WTC11 (cell line): ENCODE measurements at regions of chr1 and their contacts with region 1.

Region 1: DNA sequence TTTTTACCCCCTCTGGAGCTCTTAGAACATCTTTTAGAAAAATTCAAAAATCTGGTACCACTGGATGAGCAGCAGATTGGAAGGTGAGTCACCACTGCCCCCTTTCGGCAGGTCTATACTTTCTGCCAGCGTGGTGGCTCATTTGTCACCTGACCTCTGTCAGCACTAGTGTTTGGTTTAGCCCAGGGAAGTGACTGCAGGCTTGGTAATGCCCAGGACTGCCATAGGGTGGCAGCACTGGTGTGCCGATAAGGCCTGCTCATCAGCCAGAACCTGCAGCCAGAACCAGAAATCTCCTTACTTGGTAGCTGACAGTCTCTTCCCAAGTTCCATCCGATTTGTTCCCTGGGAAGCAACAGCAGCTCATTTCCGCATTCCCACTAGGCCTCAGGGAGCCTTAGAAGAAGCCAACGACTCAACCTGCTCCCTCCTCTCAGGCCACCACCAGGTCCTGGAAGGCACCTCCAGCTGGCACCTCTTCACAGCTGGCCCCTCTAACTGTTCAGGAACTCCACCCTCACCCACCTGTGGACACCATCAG is 6.8 kb downstream of the SMIM12 start:
- DNase-seq: peak; percentile 97
- ATAC-seq: peak; percentile 98
- H3K4me3 Mint-ChIP-seq: no peak overlapping the region
- H3K27ac Mint-ChIP-seq: peak overlapping the region; percentile 94
- H3K4me1 Mint-ChIP-seq: peaks cover 32% of the 10 kb centered on the region
- H3K27me3 Mint-ChIP-seq: no peaks in the 10 kb centered on the region
- CTCF ChIP-seq: peak; percentile 96

Region 2: GRCh38 chr1:34742667-34743270 is 110.0 kb before region 1 on chr1:
- CTCF ChIA-PET with region 1: interaction called, 10 read pairs
- POLR2A ChIA-PET with region 1: no interaction called
- DNase-seq: peak; percentile 92
- ATAC-seq: peak; percentile 93
- H3K4me3 Mint-ChIP-seq: no peak overlapping the region
- H3K27ac Mint-ChIP-seq: no peak overlapping the region
- H3K4me1 Mint-ChIP-seq: peaks cover 10% of the 10 kb centered on the region
- H3K27me3 Mint-ChIP-seq: peaks cover 8% of the 10 kb centered on the region
- CTCF ChIP-seq: peak; percentile 90

Region 3: GRCh38 chr1:34796990-34797389 is 55.8 kb before region 1 on chr1:
- CTCF ChIA-PET with region 1: interaction called, 45 read pairs
- POLR2A ChIA-PET with region 1: no interaction called
- DNase-seq: no peak
- ATAC-seq: no peak
- H3K4me3 Mint-ChIP-seq: no peak overlapping the region
- H3K27ac Mint-ChIP-seq: no peak overlapping the region
- H3K4me1 Mint-ChIP-seq: peaks cover 17% of the 10 kb centered on the region
- H3K27me3 Mint-ChIP-seq: peaks cover 21% of the 10 kb centered on the region
- CTCF ChIP-seq: no peak

Region 4: GRCh38 chr1:34825455-34826091 is 27.2 kb before region 1 on chr1:
- CTCF ChIA-PET with region 1: interaction called, 14 read pairs
- POLR2A ChIA-PET with region 1: no interaction called
- DNase-seq: no peak
- ATAC-seq: no peak
- H3K4me3 Mint-ChIP-seq: no peak overlapping the region
- H3K27ac Mint-ChIP-seq: no peak overlapping the region
- H3K4me1 Mint-ChIP-seq: no peaks in the 10 kb centered on the region
- H3K27me3 Mint-ChIP-seq: no peaks in the 10 kb centered on the region; the same call in 1 of the 2 replicates
- CTCF ChIP-seq: no peak

Region 5: DNA sequence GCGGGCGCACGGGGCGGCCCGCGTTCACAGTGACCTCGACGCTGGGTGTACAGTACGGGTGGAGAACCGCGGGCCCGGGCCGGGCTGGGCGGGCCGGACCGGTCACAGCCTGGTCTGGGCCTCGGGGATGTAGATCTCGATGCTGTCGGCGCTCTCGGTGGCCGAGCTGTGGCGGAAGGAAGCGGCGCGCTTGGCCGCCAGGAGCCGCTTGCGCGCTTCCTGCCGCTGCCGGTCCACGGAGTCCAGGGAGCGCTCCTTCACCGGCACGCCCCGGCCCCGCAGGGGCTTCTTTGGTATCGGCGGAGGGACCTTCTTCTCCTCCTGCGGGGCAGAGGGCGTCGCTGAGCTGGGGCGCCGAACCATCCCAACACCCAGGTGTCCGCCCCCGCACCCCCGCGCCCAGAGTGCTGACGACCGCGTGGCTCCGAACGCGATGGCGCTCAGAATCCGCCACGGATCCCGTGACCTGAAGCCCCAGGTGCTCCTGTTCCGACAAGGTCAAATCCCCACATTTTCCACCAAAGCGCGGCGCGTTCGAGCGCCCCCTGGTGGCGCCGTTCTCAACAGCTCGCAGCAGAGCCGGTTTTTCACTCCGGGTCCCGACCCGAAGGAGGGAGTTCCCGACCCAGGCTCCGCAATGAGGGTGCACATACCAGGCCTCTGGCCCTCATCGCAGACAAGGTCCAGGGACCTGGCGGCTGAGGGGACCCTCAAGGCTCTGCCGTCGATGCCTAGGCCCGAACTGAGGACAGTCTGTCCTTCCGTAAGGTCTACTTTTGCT is 13.4 kb after region 1 on chr1:
- CTCF ChIA-PET with region 1: interaction called, 70 read pairs
- POLR2A ChIA-PET with region 1: no interaction called
- DNase-seq: peak; percentile 93
- ATAC-seq: peak; percentile 78
- H3K4me3 Mint-ChIP-seq: peak overlapping the region; percentile 73
- H3K27ac Mint-ChIP-seq: no peak overlapping the region
- H3K4me1 Mint-ChIP-seq: 0 out of 2 replicates have a peak, but pooled peaks cover 2% of the 10 kb centered on the region
- H3K27me3 Mint-ChIP-seq: peaks cover 45% of the 10 kb centered on the region
- CTCF ChIP-seq: peak; percentile 99

Region 6: GRCh38 chr1:34885405-34886247 is 32.9 kb after region 1 on chr1:
- CTCF ChIA-PET with region 1: interaction called, 47 read pairs
- POLR2A ChIA-PET with region 1: interaction called, 5 read pairs
- DNase-seq: peak; percentile 88
- ATAC-seq: peak; percentile 88
- H3K4me3 Mint-ChIP-seq: peak overlapping the region; percentile 88
- H3K27ac Mint-ChIP-seq: no peak overlapping the region
- H3K4me1 Mint-ChIP-seq: peaks cover 7% of the 10 kb centered on the region; the same call in 1 of the 2 replicates
- H3K27me3 Mint-ChIP-seq: peaks cover 40% of the 10 kb centered on the region
- CTCF ChIP-seq: no peak

Region 7: DNA sequence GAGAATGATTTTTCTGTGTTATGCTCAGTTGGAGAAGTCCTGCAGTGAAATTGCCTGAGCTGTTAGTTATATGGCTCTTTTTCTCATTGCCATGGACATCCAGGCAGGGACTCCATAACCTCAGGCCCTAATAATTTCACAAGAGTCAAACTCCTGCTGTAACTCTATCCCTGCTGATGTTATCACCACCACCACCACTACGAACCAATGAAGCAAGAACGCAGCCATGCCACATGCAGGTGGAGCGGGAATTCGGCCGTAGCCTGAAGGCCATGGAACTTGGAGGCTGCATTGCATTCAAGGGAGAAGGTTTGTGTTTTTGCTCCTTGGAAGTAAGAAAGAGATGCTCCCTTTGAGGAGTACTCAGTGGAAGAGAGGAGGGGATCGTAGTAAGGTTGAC is 93.5 kb after region 1 on chr1:
- CTCF ChIA-PET with region 1: no interaction called
- POLR2A ChIA-PET with region 1: no interaction called
- DNase-seq: no peak
- ATAC-seq: no peak
- H3K4me3 Mint-ChIP-seq: no peak overlapping the region
- H3K27ac Mint-ChIP-seq: no peak overlapping the region
- H3K4me1 Mint-ChIP-seq: no peaks in the 10 kb centered on the region
- H3K27me3 Mint-ChIP-seq: peaks cover 3% of the 10 kb centered on the region; the same call in 1 of the 2 replicates
- CTCF ChIP-seq: no peak

Region 8: DNA sequence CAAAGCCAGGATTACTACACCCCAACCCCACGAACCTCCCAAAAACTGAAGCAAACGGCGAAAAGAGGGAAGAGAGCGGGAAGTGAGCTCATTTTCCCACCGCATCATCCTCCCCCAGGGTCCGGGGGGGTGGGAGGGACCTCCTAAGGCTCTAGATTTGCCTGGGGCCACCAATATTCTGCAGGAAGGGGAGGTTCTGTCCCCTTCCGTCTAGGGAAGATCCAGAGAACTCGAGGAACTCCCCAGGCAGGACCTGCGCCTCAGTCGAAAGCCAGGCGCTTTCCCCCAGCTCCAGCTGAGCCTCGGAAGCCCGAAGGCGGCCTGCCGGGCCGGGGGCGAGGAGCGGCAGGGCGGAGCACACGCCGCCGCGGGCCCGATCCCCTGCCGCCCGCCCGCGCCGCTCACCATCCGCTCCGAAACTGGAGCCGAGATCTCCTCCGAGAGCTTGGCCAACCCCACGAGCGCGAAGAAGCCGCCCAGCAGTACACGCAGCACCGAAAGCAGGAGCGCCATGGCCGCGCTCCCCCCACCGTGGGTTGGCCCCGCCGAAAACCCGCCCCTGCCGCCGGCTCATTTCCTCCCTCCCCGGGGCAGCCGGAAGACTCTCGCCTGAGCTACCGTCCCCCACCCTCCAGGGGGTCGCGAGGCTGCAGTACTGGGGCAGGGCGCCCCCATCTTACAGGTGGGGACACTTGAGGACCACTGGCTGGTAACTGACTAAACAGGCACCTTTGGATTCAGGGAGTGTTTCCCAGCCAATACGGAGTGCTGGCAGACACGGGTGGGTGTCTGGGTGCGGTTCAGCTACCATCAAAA is 132.3 kb after region 1 on chr1 and contains the start of gene TMEM35B:
- CTCF ChIA-PET with region 1: interaction called, 11 read pairs
- POLR2A ChIA-PET with region 1: no interaction called
- DNase-seq: peak; percentile 71
- ATAC-seq: peak; percentile 78
- H3K4me3 Mint-ChIP-seq: peak within 1 kb of the TSS; percentile 92
- H3K27ac Mint-ChIP-seq: peak within 1 kb of the TSS; percentile 79; the same call in 1 of the 2 replicates
- H3K4me1 Mint-ChIP-seq: peaks cover 11% of the 10 kb centered on the region
- H3K27me3 Mint-ChIP-seq: no peaks in the 10 kb centered on the region
- CTCF ChIP-seq: no peak
- total RNA-seq, gene TMEM35B: 8.7 to 11.0 TPM (median 10.6 TPM) in 3 replicates